ENCODE measurements at regions of chr5 and their contacts with region 1.

Region 1: DNA sequence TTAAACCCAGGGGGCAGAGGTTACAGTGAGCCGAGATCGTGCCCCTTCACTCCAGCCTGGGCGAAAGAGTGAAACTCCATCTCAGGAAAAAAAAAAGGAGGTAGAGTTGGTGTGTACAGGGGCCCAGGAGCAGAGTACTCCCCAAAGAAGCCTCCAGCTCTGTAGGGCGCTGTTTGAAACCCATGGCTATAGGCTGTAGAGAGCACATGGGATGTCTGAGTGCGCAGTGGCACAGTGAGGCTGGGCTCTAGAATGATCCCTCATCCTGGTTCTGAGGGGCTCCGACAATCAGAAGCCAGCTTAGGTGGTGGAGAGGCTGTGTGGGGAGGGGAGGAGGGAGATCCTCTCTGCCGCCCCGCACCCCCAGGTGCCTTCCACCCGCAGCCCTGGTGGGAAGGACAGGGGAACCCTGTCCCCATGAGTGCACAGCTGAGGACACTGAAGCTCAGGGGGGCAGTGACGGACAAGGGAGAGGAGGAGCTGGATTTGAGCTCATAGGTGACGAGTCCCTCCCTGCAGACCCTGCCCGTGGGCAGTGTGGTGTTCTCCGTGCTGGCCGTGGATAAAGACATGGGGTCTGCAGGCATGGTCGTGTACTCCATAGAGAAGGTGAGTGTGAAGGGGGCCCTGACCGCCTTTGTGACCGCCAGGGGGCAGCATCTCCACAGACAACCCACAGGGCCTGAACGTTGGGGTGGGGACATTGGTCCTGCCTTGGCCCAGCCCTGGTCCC is 24.6 kb downstream of the CDHR2 start:
- DNase-seq: peak; percentile 60 to 75
- H3K4me3 ChIP-seq: no peak overlapping the region
- H3K4me3 Mint-ChIP-seq: no peak overlapping the region
- H3K27ac Mint-ChIP-seq: no peak overlapping the region
- H3K4me1 ChIP-seq: no peaks in the 10 kb centered on the region
- H3K4me1 Mint-ChIP-seq: peaks cover 6% of the 10 kb centered on the region
- H3K27me3 ChIP-seq: no peaks in the 10 kb centered on the region
- H3K27me3 Mint-ChIP-seq: peaks cover 3% of the 10 kb centered on the region
- CTCF ChIP-seq: peak; percentile 80 to 83

Region 2: DNA sequence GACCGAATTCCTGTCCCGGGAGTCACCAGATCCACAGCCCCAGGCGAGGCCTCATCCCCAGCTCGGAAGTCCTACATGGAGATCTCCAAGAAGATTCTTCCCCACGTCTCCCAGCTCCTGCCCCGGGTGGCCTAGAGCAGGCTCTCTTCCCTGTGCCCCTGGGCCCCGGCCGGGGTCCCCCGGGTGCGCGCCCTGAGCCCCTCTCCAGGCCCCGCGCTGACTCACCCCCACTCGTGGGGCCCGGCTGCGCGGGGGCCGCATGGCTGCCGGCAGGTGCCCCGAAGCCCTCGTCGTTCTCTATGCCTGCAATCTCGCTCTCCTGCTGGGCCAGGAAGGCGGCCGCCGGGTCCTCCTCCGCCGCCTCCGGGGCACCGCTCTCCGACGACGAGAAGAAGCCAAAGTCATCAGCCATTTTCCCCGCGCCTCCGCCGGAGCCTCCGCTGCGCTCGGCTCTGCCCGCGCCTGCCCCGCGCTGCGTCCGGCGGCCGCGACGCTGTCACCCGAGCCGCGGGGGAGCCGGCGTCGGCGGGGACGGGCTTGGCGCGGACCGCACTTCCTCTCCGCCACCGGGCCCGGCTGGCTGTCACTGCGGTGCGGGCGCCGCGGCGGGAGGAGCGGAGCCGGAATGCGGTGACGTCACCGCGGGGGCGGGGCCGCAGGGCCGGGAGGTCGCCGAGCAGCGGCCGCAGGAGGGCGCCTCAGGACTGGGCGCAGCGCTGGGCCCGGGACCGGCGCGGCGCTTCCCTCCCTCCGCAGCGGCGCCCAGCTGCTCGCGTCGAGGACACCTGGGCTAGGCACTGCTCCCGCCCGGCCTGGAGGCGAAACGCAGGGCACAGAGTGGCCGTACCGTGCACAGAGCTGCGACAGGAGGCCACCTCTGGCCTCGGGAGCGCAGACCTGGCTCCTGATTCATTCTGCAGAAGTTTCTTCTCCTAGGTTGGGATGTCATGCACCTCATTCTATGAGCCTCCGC is 157.5 kb before region 1 on chr5 and contains the start of gene CLTB:
- CTCF ChIA-PET with region 1: interaction called, 6 read pairs
- POLR2A ChIA-PET with region 1: interaction called, 3 read pairs
- intact Hi-C with region 1: loop called (anchors 2 kb)
- DNase-seq: peak; percentile 85 to 89
- H3K4me3 ChIP-seq: peak within 1 kb of the TSS; percentile 92
- H3K4me3 Mint-ChIP-seq: peak within 1 kb of the TSS; percentile 77
- H3K27ac Mint-ChIP-seq: peak within 1 kb of the TSS; percentile 85
- H3K4me1 ChIP-seq: peaks cover 23% of the 10 kb centered on the region
- H3K4me1 Mint-ChIP-seq: peaks cover 17% of the 10 kb centered on the region
- H3K27me3 ChIP-seq: no peaks in the 10 kb centered on the region
- H3K27me3 Mint-ChIP-seq: no peaks in the 10 kb centered on the region
- CTCF ChIP-seq: peak; percentile 38 to 72
- total RNA-seq, gene CLTB: 78.9 and 80.0 TPM in 2 replicates

Region 3: GRCh38 chr5:176537608-176538504 is 35.9 kb before region 1 on chr5:
- CTCF ChIA-PET with region 1: interaction called, 5 read pairs
- POLR2A ChIA-PET with region 1: interaction called, 10 read pairs
- intact Hi-C with region 1: no loop called
- DNase-seq: peak; percentile 97 to 100
- H3K4me3 ChIP-seq: peak overlapping the region; percentile 90
- H3K4me3 Mint-ChIP-seq: peak overlapping the region; percentile 96
- H3K27ac Mint-ChIP-seq: peak overlapping the region; percentile 96
- H3K4me1 ChIP-seq: peaks cover 14% of the 10 kb centered on the region
- H3K4me1 Mint-ChIP-seq: peaks cover 29% of the 10 kb centered on the region
- H3K27me3 ChIP-seq: no peaks in the 10 kb centered on the region
- H3K27me3 Mint-ChIP-seq: no peaks in the 10 kb centered on the region
- CTCF ChIP-seq: no peak

Region 4: DNA sequence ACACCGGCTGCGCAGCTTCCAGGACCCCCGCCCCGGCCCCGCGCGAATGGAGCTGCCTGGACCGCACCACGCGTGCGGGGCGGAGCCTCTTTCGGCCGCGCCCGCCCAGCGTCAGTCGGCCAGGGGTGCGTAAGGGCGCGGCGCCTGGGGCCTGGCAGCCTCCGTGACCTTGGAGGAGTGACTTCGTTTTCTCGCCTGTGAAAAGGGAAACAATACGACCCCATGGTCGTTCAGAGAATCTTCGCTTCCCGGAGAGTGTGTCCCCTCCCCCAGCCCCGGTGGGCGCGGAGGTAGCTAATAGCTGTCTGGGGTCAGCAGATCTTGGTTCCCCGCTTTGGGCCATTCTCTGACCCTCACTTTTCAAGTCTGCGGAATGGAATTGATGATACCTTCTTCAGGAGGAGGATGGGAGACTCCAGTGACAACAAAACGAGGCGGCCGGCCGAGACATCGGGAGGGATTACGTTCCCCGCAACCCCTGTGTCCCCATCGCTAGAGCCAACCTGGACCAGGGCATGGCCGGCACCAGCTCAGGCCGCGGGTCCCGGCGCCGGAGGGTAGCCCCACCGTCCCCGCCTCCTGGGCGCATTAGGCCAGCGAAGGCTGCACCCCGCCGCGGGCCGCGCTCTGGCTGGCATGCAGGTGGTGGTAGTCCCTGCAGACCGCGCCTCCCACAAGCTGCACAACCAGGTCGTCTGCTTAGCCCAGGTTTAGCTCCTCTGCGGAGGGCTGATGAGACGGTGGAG is 30.1 kb before region 1 on chr5:
- CTCF ChIA-PET with region 1: interaction called, 5 read pairs
- POLR2A ChIA-PET with region 1: interaction called, 5 read pairs
- intact Hi-C with region 1: loop called (anchors 1 kb)
- DNase-seq: peak; percentile 81 to 82
- H3K4me3 ChIP-seq: peak overlapping the region; percentile 71
- H3K4me3 Mint-ChIP-seq: peak overlapping the region; percentile 85
- H3K27ac Mint-ChIP-seq: peak overlapping the region; percentile 86
- H3K4me1 ChIP-seq: peaks cover 33% of the 10 kb centered on the region
- H3K4me1 Mint-ChIP-seq: peaks cover 29% of the 10 kb centered on the region
- H3K27me3 ChIP-seq: no peaks in the 10 kb centered on the region
- H3K27me3 Mint-ChIP-seq: no peaks in the 10 kb centered on the region
- CTCF ChIP-seq: no peak

Region 5: GRCh38 chr5:176619203-176619568 is 45.5 kb after region 1 on chr5:
- CTCF ChIA-PET with region 1: interaction called, 5 read pairs
- POLR2A ChIA-PET with region 1: no interaction called
- intact Hi-C with region 1: loop called (anchors 1 kb)
- DNase-seq: peak; percentile 88 to 89
- H3K4me3 ChIP-seq: 0 out of 2 replicates have a peak overlapping the region, but pooled peaks have one; percentile 2
- H3K4me3 Mint-ChIP-seq: peak overlapping the region; percentile 60
- H3K27ac Mint-ChIP-seq: no peak overlapping the region
- H3K4me1 ChIP-seq: peaks cover 6% of the 10 kb centered on the region; the same call in 1 of the 2 replicates
- H3K4me1 Mint-ChIP-seq: no peaks in the 10 kb centered on the region
- H3K27me3 ChIP-seq: peaks cover 6% of the 10 kb centered on the region
- H3K27me3 Mint-ChIP-seq: peaks cover 30% of the 10 kb centered on the region
- CTCF ChIP-seq: no peak

Region 6: GRCh38 chr5:176647030-176647866 is 73.5 kb after region 1 on chr5 and contains the start of gene TSPAN17:
- CTCF ChIA-PET with region 1: interaction called, 8 read pairs
- POLR2A ChIA-PET with region 1: no interaction called
- intact Hi-C with region 1: loop called (anchors 2 kb)
- DNase-seq: peak; percentile 100
- H3K4me3 ChIP-seq: peak within 1 kb of the TSS; percentile 72
- H3K4me3 Mint-ChIP-seq: peak within 1 kb of the TSS; percentile 71
- H3K27ac Mint-ChIP-seq: peak within 1 kb of the TSS; percentile 63
- H3K4me1 ChIP-seq: peaks cover 10% of the 10 kb centered on the region
- H3K4me1 Mint-ChIP-seq: no peaks in the 10 kb centered on the region
- H3K27me3 ChIP-seq: no peaks in the 10 kb centered on the region
- H3K27me3 Mint-ChIP-seq: no peaks in the 10 kb centered on the region
- CTCF ChIP-seq: no peak
- total RNA-seq, gene TSPAN17: 19.6 and 20.5 TPM in 2 replicates